ENCODE measurements at regions of chr10 and their contacts with region 1.

Region 1: DNA sequence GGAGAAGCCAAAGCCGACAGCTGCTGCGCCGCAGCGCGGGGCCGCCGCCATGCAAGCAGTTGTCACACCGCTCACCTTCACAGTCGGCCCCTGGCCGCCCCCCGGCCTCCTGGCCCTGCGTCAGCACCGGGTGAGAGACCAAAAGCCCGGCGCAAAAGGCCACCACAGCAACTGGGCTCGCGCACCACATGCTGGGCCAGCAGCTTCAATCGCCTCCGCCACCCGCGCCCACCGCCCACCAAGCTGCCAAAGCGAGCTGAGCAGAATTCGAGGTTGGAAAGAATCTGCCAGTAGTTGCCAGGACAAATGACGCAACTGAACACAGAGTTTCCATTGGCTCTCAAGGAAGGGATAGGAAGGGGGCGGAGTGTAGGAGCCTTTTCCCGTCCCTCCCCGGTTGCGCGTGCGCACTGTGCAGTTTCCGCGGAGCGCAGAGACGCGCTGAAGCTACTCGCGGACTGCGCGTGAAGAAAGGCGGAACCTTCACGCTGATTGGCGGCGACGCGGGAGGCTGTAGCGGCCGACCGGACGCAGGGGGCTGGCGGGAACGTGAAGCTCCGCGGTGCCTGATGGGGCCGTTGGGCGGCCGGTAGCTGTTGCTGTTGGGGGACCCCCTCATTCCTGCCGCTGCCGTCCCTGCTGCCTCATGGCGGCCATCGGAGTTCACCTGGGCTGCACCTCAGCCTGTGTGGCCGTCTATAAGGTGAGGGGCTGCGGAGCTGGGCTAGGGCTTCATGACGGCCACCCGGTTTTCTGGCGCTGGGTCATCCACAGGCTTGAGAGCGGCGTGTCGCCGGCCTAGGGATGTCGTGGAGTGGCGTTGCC is at the starts of genes CDNF, HSPA14 and MSANTD7:
- DNase-seq: peak; percentile 100
- H3K4me3 Mint-ChIP-seq: peak within 1 kb of the TSS; percentile 93
- H3K27ac Mint-ChIP-seq: peak within 1 kb of the TSS; percentile 94
- H3K4me1 Mint-ChIP-seq: peaks cover 20% of the 10 kb centered on the region
- H3K27me3 Mint-ChIP-seq: no peaks in the 10 kb centered on the region
- total RNA-seq, gene CDNF: 0.47 and 0.93 TPM in 2 replicates
- total RNA-seq, gene HSPA14: 36.6 and 38.0 TPM in 2 replicates
- total RNA-seq, gene MSANTD7: 26.7 and 29.6 TPM in 2 replicates

Region 2: DNA sequence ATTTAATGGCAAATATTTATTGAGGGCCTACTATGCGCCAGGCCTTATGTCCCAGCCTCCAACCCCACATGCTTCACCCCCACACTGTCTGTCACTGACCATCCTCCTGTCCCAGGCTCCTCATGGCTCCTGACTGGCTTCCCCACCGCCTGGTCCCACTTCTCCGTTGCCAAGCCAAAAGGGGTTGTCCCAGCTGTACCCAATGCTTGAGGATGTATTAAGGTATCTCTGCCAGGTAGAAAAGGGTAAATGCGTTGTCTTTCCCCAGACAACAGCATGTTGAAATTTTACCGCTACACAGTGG is 338.4 kb before region 1 on chr10:
- intact Hi-C with region 1: loop called (anchors 1 kb)
- DNase-seq: no peak
- H3K4me3 Mint-ChIP-seq: no peak overlapping the region
- H3K27ac Mint-ChIP-seq: no peak overlapping the region
- H3K4me1 Mint-ChIP-seq: peaks cover 14% of the 10 kb centered on the region
- H3K27me3 Mint-ChIP-seq: peaks cover 4% of the 10 kb centered on the region

Region 3: GRCh38 chr10:14560274-14560673 is 277.7 kb before region 1 on chr10:
- intact Hi-C with region 1: loop called (anchors 2 kb)
- DNase-seq: peak; percentile 59
- H3K4me3 Mint-ChIP-seq: peak overlapping the region; percentile 41
- H3K27ac Mint-ChIP-seq: peak overlapping the region; percentile 95
- H3K4me1 Mint-ChIP-seq: peaks cover 97% of the 10 kb centered on the region
- H3K27me3 Mint-ChIP-seq: no peaks in the 10 kb centered on the region

Region 4: GRCh38 chr10:14648005-14648765 is 189.8 kb before region 1 on chr10:
- intact Hi-C with region 1: loop called (anchors 1 kb)
- DNase-seq: peak; percentile 67
- H3K4me3 Mint-ChIP-seq: peak overlapping the region; percentile 73
- H3K27ac Mint-ChIP-seq: peak overlapping the region; percentile 98
- H3K4me1 Mint-ChIP-seq: peaks cover 61% of the 10 kb centered on the region
- H3K27me3 Mint-ChIP-seq: no peaks in the 10 kb centered on the region

Region 5: GRCh38 chr10:14822879-14823755 is 14.9 kb before region 1 on chr10:
- intact Hi-C with region 1: loop called (anchors 2 kb)
- DNase-seq: no peak
- H3K4me3 Mint-ChIP-seq: no peak overlapping the region
- H3K27ac Mint-ChIP-seq: no peak overlapping the region
- H3K4me1 Mint-ChIP-seq: peaks cover 22% of the 10 kb centered on the region
- H3K27me3 Mint-ChIP-seq: peaks cover 9% of the 10 kb centered on the region

Region 6: DNA sequence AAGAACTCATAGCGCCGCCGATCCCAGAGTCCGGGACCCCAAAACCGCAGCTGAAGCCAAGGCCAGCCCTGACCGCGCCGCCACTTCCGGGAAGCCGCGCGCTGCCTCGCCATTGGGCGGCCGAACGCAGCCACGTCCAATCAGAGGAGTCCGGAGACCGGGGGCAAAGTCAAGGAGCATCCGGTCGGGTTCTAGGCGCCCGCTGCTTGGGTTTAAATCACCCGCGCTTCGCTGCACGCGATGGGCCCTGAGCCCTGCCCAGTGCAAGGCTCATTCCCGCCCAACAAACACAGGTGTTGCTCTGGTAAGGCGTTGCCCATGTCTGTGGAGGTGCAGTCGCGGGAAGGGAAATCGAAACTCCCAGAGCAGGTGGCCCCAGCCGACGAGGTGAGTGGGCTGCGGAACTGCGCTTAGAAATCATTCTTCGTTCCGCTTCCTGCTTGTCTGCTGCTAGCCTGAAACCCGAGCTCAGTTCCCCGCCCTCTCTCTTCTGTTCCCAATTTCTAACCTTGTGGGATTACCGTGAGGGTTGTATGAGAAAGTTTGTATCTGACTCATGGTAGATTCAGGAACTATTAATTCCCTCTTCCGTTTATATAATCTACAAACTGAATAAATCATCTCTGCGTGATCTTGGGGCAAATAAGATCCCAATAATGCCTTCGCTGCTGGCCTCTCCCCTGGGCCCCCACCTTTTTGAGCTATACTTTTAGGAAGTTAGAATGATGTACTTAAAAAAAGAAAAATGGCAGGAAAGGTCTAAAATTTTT is 116.2 kb after region 1 on chr10 and contains the start of gene DCLRE1C:
- intact Hi-C with region 1: loop called (anchors 1 kb)
- DNase-seq: peak; percentile 89
- H3K4me3 Mint-ChIP-seq: peak within 1 kb of the TSS; percentile 94
- H3K27ac Mint-ChIP-seq: peak within 1 kb of the TSS; percentile 95
- H3K4me1 Mint-ChIP-seq: peaks cover 57% of the 10 kb centered on the region
- H3K27me3 Mint-ChIP-seq: no peaks in the 10 kb centered on the region
- total RNA-seq, gene DCLRE1C: 15.5 and 20.9 TPM in 2 replicates

Region 7: DNA sequence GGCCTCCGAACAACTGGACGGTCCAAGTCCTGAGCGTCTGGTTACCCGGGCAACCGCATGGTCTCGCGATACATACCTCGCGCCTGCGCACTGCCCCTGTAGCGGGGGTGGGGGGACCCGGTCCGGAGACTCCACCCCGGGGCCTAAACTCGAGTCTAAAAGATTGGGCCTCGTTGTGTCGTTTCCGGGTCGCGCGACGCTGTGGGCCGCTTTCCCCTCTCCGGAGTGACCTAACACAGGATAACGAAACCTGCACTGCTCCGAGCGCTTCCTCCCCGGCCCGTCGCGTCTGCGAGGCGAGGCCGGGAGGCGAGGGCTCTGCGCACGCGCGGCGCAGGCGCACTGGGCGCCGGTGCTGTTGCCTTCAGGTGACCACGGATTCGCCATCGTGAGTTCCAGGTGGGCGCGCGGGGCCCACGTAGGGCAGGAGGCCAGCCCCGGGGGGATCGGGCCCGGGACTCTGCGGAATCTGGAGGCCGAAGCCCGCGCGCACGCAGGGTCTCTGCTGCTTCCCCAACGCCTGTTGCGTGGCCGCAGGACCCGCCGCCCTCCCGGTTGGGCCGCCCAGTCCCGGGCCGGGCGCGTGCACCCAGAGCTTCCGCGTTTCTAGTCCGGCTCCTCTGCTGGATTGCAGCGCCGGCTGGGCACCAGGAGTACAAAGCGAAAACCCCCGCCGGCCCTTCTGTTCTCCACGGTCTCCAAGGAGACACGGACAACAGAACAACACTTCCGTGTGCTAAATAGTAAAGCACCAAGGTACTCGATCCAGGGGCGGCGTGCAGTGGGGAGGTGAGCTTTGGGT is 259.2 kb after region 1 on chr10 and contains the start of gene RPP38:
- intact Hi-C with region 1: loop called (anchors 2 kb)
- DNase-seq: peak; percentile 94
- H3K4me3 Mint-ChIP-seq: peak within 1 kb of the TSS; percentile 100
- H3K27ac Mint-ChIP-seq: peak within 1 kb of the TSS; percentile 99
- H3K4me1 Mint-ChIP-seq: peaks cover 29% of the 10 kb centered on the region
- H3K27me3 Mint-ChIP-seq: peaks cover 10% of the 10 kb centered on the region
- total RNA-seq, gene RPP38: 19.6 and 24.8 TPM in 2 replicates

Measured in activated T-helper 1 cell treated with anti-CD3 and anti-CD28 coated beads, Interleukin-12 subunit alpha, Interleukin-12 subunit beta, Interleukin-2, Interleukin-4 antibody, amounts not matched to agents 30 ng/mL and 10 ng/mL and 1 ng/mL, durations not matched to agents 14 hours and 24 hours and 36 hours (primary cell).